ENCODE measurements at regions of chr17 and their contacts with region 1.

Region 1: DNA sequence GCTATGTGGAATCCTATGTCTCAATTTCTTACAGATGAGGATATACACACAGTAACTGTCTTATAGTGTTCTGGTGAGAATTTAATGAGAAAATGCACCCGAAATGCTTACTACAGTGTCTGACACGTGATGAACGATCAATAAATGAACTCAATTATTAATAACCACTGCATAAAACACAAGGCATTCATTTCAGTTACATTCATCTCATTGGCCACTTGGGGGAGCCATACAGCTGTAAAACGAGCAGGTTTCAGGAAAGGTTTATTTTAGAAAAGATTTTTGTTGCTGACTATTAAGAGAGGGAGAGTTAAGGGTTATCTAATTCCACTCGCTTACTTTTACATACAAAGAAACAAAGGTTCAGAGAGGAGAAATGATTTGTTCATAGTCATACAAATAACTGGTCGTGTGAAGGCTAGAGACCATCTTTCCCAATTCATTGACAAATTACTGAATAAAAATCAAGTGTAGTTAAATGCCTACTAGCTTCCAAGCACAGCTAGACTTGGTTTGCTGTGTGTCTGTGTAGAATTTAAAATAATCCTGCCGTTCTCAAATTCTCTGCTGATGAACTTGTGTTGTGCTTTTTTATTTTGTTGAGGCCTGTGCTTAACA is 160.1 kb downstream of the MAP2K4 start:
- DNase-seq: peak; percentile 4
- H3K4me3 ChIP-seq: no peak overlapping the region
- H3K27ac ChIP-seq: no peak overlapping the region
- H3K4me1 ChIP-seq: no peaks in the 10 kb centered on the region
- H3K27me3 ChIP-seq: no peaks in the 10 kb centered on the region
- CTCF ChIP-seq: peak in 2 of 3 experiments; percentile 51 to 68

Region 2: DNA sequence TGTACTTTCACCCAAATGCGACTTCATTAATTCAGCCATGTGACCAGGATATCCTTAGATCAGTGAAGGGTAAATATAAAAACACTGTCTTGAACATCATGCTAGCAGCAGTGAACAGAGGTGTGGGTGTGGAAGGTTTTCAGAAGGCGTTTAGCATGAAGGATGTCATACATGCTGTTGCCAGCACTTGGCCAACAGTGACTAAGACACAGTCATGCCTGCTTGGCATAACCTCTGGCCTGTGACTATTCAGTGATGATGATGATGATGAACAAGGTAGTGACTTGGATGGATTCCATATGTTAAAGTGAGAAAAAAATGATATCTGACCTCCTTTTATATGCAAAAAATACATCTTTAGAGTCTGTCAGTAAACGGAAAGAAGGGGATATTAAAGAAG is 62.1 kb before region 1 on chr17:
- dilution Hi-C with region 1: no loop called
- DNase-seq: peak; percentile 4
- H3K4me3 ChIP-seq: no peak overlapping the region
- H3K27ac ChIP-seq: no peak overlapping the region
- H3K4me1 ChIP-seq: no peaks in the 10 kb centered on the region
- H3K27me3 ChIP-seq: no peaks in the 10 kb centered on the region
- CTCF ChIP-seq: no peak

Region 3: DNA sequence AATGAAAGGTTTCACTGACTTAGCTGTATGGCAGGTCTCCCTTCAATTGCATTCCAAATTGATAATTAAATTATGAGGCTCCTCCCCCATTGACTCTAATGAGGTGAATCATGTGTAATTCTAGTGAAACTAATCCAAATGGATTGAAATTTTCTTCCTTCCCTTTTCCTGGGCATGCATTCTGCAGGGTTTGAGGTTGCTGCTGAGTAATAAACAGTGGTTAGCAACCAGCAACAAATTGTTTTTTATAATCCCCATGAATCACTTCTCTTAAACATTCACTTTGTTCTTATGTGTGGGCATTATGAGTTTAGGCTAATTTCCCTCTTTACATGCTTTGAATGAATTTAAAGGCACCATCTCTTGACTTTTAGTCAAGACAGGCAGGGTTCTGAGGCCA is 528.3 kb after region 1 on chr17:
- dilution Hi-C with region 1: loop called (anchors 25 kb)
- DNase-seq: no peak
- H3K4me3 ChIP-seq: no peak overlapping the region
- H3K27ac ChIP-seq: no peak overlapping the region
- H3K4me1 ChIP-seq: no peaks in the 10 kb centered on the region
- H3K27me3 ChIP-seq: no peaks in the 10 kb centered on the region
- CTCF ChIP-seq: no peak

Region 4: DNA sequence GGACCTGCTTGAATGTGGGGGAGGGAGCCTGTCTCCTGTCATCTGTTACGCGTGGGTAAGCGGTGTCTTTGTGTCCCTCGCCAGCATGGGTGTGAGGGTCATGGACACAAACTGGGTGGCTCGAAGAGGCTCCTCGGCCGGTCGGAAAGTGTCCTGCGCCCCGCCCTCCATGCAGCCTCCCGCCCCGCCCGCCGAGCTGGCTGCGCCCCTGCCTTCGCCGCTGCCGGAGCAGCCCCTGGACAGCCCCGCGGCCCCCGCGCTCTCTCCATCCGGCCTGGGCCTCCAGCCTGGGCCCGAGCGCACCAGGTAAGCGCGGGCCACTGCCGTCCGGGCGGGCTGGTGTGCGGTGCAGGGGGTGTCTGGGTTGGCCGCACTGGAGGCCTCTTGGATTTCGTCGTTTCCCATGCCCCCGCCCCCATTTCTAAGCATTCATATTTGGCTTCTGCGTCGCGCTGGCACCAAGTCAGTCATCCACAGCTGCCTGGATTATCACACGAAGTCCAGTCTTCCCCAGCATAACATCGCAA is 793.3 kb after region 1 on chr17:
- dilution Hi-C with region 1: loop called (anchors 25 kb)
- DNase-seq: no peak
- H3K4me3 ChIP-seq: no peak overlapping the region
- H3K27ac ChIP-seq: no peak overlapping the region
- H3K4me1 ChIP-seq: peaks cover 6% of the 10 kb centered on the region
- H3K27me3 ChIP-seq: peaks cover 8% of the 10 kb centered on the region
- CTCF ChIP-seq: no peak

Measured in keratinocyte (primary cell).